ENCODE measurements at regions of chr10 and their contacts with region 1.

Region 1: GRCh38 chr10:16891375-16892313 is 74.4 kb upstream of the RSU1 start:
- DNase-seq: peak; percentile 79
- H3K4me3 ChIP-seq: no peak overlapping the region
- H3K27ac ChIP-seq: no peak overlapping the region
- H3K4me1 ChIP-seq: no peaks in the 10 kb centered on the region
- H3K27me3 ChIP-seq: no peaks in the 10 kb centered on the region
- CTCF ChIP-seq: peak in 2 of 3 experiments; percentile 38 to 48
- POLR2A ChIP-seq: no peak

Region 2: GRCh38 chr10:17175551-17175950 is 283.9 kb after region 1 on chr10:
- intact Hi-C with region 1: no loop called
- DNase-seq: peak; percentile 30
- H3K4me3 ChIP-seq: no peak overlapping the region
- H3K27ac ChIP-seq: no peak overlapping the region
- H3K4me1 ChIP-seq: no peaks in the 10 kb centered on the region
- H3K27me3 ChIP-seq: no peaks in the 10 kb centered on the region
- CTCF ChIP-seq: no peak
- POLR2A ChIP-seq: no peak

Region 3: DNA sequence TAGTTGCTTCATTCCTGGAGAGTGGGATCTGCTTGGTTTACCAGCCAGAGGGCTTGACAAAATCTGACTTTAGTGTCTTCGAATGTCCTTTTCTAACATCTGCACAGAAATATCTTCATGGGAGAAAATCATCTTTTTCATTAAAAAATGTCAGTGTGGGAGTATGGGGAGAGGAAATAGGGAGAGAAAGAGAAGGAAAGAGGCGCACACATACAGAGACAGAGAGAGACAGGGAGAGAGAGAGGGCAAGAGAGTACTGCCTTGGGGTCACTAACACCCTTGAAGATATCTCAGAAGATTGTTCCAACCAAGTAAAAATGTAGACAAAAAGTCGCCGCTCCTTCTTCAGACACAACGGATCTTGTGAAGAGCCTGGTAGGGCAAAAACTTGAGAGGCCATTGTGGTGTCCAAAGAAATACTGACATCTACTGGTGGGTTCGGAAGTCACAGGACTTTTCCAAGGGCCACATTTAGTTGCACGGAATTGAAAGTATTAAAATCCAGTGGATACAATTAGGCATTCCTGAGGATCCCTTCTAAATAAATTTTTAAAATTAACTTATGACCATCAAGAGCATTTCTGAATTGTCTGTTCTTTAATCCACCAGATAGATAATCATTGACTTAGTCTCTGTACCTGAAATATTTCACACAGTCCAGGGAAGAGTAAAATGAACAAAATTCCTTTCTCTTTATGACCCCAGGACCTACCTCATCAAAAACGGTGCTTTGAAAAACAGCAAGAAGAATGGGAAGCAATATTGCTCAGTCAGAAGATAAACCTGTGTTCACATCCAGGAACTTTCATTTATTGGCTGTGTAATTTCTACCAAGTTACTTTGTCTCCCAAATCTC is 366.1 kb after region 1 on chr10:
- intact Hi-C with region 1: loop called (anchors 10 kb)
- DNase-seq: peak; percentile 74
- H3K4me3 ChIP-seq: peak overlapping the region in 1 of 2 donors; percentile 14
- H3K27ac ChIP-seq: peak overlapping the region; percentile 21 to 36
- H3K4me1 ChIP-seq: peaks cover 4% of the 10 kb centered on the region
- H3K27me3 ChIP-seq: no peaks in the 10 kb centered on the region
- CTCF ChIP-seq: peak; percentile 61 to 83 (median 76)
- POLR2A ChIP-seq: no peak

Measured in testis (tissue), 5 donors.